Sciatic nerve (tissue), 2 donors: ENCODE measurements at regions of chr11 and their contacts with region 1.

Region 1: DNA sequence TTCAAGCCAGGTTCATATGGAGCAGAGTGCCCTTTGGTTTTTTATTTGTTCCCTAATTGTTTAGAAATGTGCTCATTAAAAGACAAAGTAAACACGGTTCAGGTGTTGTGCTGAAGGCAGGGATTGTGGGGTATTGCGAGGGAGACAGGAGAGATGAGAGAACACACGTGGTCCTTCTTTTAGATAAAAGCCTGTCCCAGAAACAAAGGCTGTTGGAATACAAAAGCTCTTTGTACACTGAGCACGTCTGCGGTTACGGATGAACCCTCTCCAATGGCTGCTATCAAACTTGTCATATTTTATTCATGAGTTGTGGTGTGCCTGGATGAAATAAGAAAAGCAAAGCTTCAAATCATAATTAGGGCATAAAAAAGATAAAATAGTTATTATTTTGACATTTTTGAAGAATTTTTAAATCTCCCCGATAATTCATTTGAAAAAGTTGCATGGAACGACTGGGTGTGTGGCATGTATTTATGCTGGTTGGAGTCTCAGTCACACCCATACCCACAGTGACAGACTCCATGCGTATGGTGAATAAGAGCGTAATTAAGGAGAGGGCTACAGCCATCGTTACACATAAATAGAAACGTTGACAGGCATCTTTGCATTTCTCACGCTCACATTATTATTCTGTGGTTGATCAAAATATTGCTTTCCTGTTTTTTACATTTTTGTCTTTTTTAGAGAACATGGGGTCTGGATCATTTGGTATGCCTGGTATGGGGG is 92.9 kb downstream of the NELL1 start:
- DNase-seq: no peak
- ATAC-seq: no peak

Region 2: DNA sequence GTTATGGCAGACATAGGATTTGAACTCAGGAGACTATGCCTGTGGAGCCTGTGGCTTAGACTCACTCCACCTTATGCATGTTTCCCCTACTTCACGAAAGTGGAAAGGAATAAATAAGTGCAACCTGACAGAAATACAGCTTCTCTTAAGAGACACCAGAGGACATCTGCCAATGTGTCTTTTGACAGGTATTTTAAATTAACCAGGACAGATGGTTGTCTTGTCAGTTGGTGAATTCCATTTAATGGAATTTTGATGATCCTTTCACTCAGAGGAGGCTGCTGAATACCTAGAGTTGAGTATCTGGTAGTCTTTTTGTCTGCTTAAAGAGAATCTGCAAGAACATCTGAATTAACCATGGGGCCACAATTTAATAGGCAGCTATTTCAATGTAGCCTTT is 46.8 kb before region 1 on chr11:
- intact Hi-C with region 1: loop called (anchors 1 kb)
- DNase-seq: no peak
- ATAC-seq: no peak